Activated CD4-positive, alpha-beta T cell treated with anti-CD3 and anti-CD28 coated beads for 36 hours (primary cell): ENCODE measurements at regions of chr9 and their contacts with region 1.

Region 1: GRCh38 chr9:136439550-136440408 is at the start of gene INPP5E:
- DNase-seq: peak; percentile 89
- ATAC-seq: peak; percentile 85
- H3K4me3 Mint-ChIP-seq: peak within 1 kb of the TSS; percentile 80
- H3K27ac Mint-ChIP-seq: no peak within 1 kb of the TSS
- H3K4me1 Mint-ChIP-seq: peaks cover 21% of the 10 kb centered on the region
- H3K27me3 Mint-ChIP-seq: no peaks in the 10 kb centered on the region
- total RNA-seq, gene INPP5E: 13.5 to 14.1 TPM

Region 2: GRCh38 chr9:136312436-136312835 is 127.3 kb before region 1 on chr9:
- CTCF ChIA-PET with region 1: no interaction called
- POLR2A ChIA-PET with region 1: no interaction called
- intact Hi-C with region 1: loop called in 1 of 2 experiments (anchors 1 kb)
- DNase-seq: peak; percentile 74
- ATAC-seq: peak; percentile 80
- H3K4me3 Mint-ChIP-seq: no peak overlapping the region
- H3K27ac Mint-ChIP-seq: no peak overlapping the region
- H3K4me1 Mint-ChIP-seq: no peaks in the 10 kb centered on the region
- H3K27me3 Mint-ChIP-seq: no peaks in the 10 kb centered on the region

Region 3: GRCh38 chr9:136410500-136411287 is 29.1 kb before region 1 on chr9 and contains the starts of genes ENTR1 and PMPCA:
- CTCF ChIA-PET with region 1: no interaction called
- POLR2A ChIA-PET with region 1: no interaction called
- intact Hi-C with region 1: loop called in 1 of 2 experiments (anchors 1 kb)
- DNase-seq: peak; percentile 98
- ATAC-seq: peak; percentile 75
- H3K4me3 Mint-ChIP-seq: peak within 1 kb of the TSS; percentile 90
- H3K27ac Mint-ChIP-seq: peak within 1 kb of the TSS; percentile 94
- H3K4me1 Mint-ChIP-seq: peaks cover 49% of the 10 kb centered on the region
- H3K27me3 Mint-ChIP-seq: no peaks in the 10 kb centered on the region
- total RNA-seq, gene ENTR1: 57.2 to 67.7 TPM
- total RNA-seq, gene PMPCA: 88.0 to 113 TPM

Region 4: DNA sequence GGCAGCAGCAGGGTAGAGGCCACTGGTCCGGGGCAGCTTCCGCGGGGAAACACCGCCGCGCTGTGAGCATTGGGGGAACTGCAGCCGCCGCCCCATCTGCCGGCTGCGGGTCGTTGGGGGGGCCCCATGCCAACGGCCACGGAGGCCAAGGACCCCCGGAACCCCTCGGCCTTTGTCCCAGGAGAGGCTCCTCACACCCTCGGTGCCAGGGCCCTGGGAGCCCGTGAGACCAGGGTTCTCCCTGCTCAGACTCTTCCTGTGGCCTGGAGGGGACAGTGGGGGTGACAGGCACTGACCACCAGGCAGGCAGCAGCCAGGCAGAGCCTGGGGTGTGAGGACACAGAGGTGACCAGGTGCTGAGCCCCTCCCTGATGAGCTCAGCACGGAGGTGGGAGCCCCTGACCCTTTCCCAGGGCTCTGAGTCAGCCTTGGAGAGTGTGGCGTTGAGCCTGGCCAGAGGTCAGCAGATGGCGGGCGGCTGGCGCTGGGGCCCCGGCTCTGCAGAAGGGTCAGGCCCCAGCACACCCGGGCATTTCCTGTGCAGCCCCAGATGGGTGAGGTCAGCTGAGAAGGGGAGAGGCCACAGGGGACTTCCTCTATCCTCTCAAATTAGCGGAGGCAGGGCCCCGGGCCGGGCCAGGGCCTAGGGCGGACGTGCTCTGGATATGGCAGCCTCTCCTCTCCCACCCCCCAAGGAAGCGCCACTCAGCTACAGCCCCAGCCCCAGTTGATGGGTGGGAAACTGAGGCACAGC is 205.0 kb after region 1 on chr9:
- CTCF ChIA-PET with region 1: no interaction called
- POLR2A ChIA-PET with region 1: no interaction called
- intact Hi-C with region 1: loop called in 1 of 2 experiments (anchors 1 kb)
- DNase-seq: peak; percentile 87
- ATAC-seq: peak; percentile 98
- H3K4me3 Mint-ChIP-seq: no peak overlapping the region
- H3K27ac Mint-ChIP-seq: no peak overlapping the region
- H3K4me1 Mint-ChIP-seq: no peaks in the 10 kb centered on the region
- H3K27me3 Mint-ChIP-seq: peaks cover 20% of the 10 kb centered on the region